Mammary epithelial cell (primary cell): ENCODE measurements at regions of chr16 and their contacts with region 1.

Region 1: DNA sequence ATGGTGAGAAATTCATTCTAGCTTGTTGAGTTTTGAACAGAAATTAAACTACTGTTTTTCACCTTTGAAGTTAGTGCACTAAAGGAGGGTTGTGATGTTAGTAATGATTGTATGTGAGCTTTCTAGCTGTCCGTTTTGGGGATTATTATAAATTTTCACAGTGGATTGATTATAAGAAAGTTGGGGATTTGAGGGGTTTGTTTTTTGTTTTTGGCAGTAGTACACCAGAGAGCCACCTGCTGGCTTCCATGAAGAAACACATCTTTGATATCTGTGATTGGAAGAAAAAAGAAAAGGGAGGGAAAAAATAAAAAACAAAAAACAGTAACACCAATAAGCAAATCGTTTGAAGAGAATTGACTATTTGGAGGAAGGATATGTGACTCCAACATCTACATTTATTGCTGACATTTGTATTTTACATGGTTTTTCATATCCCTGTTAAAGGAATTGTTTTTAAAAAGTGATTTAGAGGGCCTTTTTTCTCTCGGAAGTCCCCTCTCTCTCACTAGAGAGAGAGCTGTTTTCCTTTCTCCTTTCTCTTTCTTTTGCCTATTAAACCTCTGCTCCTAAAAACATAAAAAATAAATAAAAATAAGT is 1469.5 kb upstream of the GOT2 start:
- DNase-seq: peak; percentile 2
- H3K4me3 ChIP-seq: no peak overlapping the region
- H3K27ac ChIP-seq: no peak overlapping the region
- H3K4me1 ChIP-seq: no peaks in the 10 kb centered on the region
- H3K27me3 ChIP-seq: no peaks in the 10 kb centered on the region
- CTCF ChIP-seq: peak; percentile 26 to 63

Region 2: GRCh38 chr16:59593194-59593661 is 610.4 kb before region 1 on chr16:
- CTCF ChIA-PET with region 1: no interaction called
- dilution Hi-C with region 1: no loop called
- in situ Hi-C with region 1: no loop called
- intact Hi-C with region 1: loop called (anchors 5 kb)
- DNase-seq: peak; percentile 54
- H3K4me3 ChIP-seq: no peak overlapping the region
- H3K27ac ChIP-seq: no peak overlapping the region
- H3K4me1 ChIP-seq: no peaks in the 10 kb centered on the region
- H3K27me3 ChIP-seq: no peaks in the 10 kb centered on the region
- CTCF ChIP-seq: no peak

Region 3: GRCh38 chr16:60091529-60091928 is 112.1 kb before region 1 on chr16:
- CTCF ChIA-PET with region 1: no interaction called
- dilution Hi-C with region 1: no loop called
- in situ Hi-C with region 1: no loop called
- intact Hi-C with region 1: no loop called
- DNase-seq: no peak
- H3K4me3 ChIP-seq: no peak overlapping the region
- H3K27ac ChIP-seq: no peak overlapping the region
- H3K4me1 ChIP-seq: no peaks in the 10 kb centered on the region
- H3K27me3 ChIP-seq: no peaks in the 10 kb centered on the region
- CTCF ChIP-seq: no peak

Region 4: DNA sequence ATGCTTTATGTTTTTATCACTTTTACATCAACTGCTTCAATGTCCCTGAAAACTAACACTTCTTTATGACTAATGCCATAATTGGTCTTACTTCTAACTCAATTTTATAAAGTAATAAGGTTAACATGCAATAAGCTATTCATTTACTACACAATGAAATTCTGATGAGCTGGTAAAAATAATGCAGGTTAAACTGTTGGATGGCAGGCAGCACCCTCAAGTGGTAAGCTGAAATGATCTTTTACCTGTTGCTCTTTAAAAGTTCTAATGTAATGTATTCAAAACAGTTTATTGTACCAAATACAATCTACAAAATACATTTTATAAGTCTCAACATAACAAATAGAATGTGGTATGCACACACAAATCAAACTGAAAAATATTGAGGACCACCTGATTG is 552.3 kb after region 1 on chr16:
- CTCF ChIA-PET with region 1: no interaction called
- dilution Hi-C with region 1: no loop called
- in situ Hi-C with region 1: no loop called
- intact Hi-C with region 1: loop called (anchors 10 kb)
- DNase-seq: peak; percentile 6
- H3K4me3 ChIP-seq: no peak overlapping the region
- H3K27ac ChIP-seq: no peak overlapping the region
- H3K4me1 ChIP-seq: no peaks in the 10 kb centered on the region
- H3K27me3 ChIP-seq: no peaks in the 10 kb centered on the region
- CTCF ChIP-seq: peak; percentile 45 to 60